T-cell (primary cell): ENCODE measurements at regions of chr9 and their contacts with region 1.

Region 1: DNA sequence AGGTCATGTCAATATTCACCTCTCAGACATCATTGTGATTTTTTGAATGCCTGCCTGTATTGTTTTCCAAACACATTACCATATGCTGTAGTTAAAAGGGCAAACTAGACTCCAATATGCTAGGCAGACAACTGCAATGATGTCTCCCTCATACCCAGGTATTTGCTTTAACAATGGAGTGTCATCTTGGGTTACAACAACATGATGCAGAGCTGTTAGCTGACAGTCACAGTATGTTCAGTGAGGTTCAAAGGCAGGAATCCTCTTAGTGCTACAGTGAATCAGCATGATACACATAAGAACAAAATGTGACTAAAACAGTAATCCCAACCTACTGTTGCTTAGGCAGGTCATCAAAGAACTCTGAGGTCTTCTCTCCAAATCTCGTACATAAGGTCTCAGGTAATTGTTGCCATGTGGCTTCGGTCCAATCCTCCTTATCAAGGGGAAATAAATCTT is 24.0 kb downstream of the OR1J1 start:
- DNase-seq: no peak
- ATAC-seq: no peak
- H3K4me3 ChIP-seq: no peak overlapping the region
- H3K4me3 Mint-ChIP-seq: no peak overlapping the region
- H3K27ac ChIP-seq: no peak overlapping the region
- H3K27ac Mint-ChIP-seq: no peak overlapping the region
- H3K4me1 ChIP-seq: no peaks in the 10 kb centered on the region
- H3K4me1 Mint-ChIP-seq: no peaks in the 10 kb centered on the region
- H3K27me3 ChIP-seq: no peaks in the 10 kb centered on the region
- H3K27me3 Mint-ChIP-seq: peaks cover 5 to 19% of the 10 kb centered on the region in 2 donors

Region 2: GRCh38 chr9:122151267-122151828 is 302.4 kb before region 1 on chr9:
- CTCF ChIA-PET with region 1: no interaction called
- POLR2A ChIA-PET with region 1: interaction called in 1 of 2 experiments, 14 read pairs
- DNase-seq: no peak
- ATAC-seq: no peak
- H3K4me3 ChIP-seq: no peak overlapping the region
- H3K4me3 Mint-ChIP-seq: no peak overlapping the region
- H3K27ac ChIP-seq: no peak overlapping the region
- H3K27ac Mint-ChIP-seq: no peak overlapping the region
- H3K4me1 ChIP-seq: peaks cover 0 to 2% of the 10 kb centered on the region in 2 experiments
- H3K4me1 Mint-ChIP-seq: peaks cover 22 to 28% (median 23%) of the 10 kb centered on the region in 3 donors
- H3K27me3 ChIP-seq: no peaks in the 10 kb centered on the region
- H3K27me3 Mint-ChIP-seq: no peaks in the 10 kb centered on the region

Region 3: GRCh38 chr9:122370869-122371755 is 82.6 kb before region 1 on chr9 and contains the start of gene PTGS1:
- CTCF ChIA-PET with region 1: no interaction called
- POLR2A ChIA-PET with region 1: no interaction called
- DNase-seq: peak in 2 of 35 experiments; percentile 17 to 20
- ATAC-seq: peak in 3 of 4 experiments; percentile 36 to 52 (median 41)
- H3K4me3 ChIP-seq: peak within 1 kb of the TSS; percentile 19 to 27
- H3K4me3 Mint-ChIP-seq: peak within 1 kb of the TSS; percentile 58 to 77 (median 68)
- H3K27ac ChIP-seq: no peak within 1 kb of the TSS
- H3K27ac Mint-ChIP-seq: no peak within 1 kb of the TSS
- H3K4me1 ChIP-seq: peaks cover 0 to 14% of the 10 kb centered on the region in 2 experiments
- H3K4me1 Mint-ChIP-seq: peaks cover 10 to 18% (median 12%) of the 10 kb centered on the region in 3 donors
- H3K27me3 ChIP-seq: peaks cover 0 to 58% of the 10 kb centered on the region in 2 experiments
- H3K27me3 Mint-ChIP-seq: peaks cover 29 to 41% of the 10 kb centered on the region in 2 donors
- total RNA-seq, gene PTGS1: 0.44 to 2.0 (median 0.86) TPM